ENCODE measurements at regions of chr9 and their contacts with region 1.

Region 1: DNA sequence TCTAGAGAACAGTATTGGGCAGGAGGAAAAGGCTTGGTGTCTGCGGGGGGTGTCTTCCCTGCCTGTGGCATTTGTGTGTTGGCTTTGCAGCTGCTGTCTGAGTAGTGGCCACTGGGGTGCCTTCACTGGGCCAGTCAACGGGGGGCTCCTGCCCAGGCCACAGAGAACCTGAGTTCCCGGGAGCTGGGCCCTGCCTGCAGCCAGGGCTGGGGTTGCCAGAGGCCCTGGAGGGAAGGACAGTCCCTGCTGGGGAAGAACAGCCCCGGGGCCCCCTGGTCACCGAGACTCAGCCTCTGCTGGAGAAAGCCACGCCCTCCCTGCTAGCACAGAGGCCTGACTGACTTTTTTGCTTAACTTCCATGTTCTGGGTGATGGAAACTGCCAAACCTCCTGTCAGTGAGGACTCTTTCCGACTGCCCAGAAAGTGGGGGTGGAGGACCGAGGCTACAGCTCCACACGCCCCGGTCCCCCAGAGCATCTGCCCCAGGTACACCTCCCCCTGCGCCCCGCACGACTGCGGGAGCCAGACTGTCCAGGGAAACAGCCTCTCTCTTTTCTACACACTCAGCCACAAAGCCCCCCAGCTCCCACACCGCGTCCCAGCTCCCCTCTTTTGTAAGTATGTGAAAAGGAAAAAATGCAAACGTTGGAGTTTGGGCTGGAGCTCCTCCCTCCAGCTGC is 133.4 kb downstream of the DAB2IP start:
- DNase-seq: no peak
- H3K4me3 ChIP-seq: no peak overlapping the region
- H3K27ac ChIP-seq: no peak overlapping the region
- H3K4me1 ChIP-seq: no peaks in the 10 kb centered on the region
- H3K27me3 ChIP-seq: no peaks in the 10 kb centered on the region
- CTCF ChIP-seq: no peak

Region 2: DNA sequence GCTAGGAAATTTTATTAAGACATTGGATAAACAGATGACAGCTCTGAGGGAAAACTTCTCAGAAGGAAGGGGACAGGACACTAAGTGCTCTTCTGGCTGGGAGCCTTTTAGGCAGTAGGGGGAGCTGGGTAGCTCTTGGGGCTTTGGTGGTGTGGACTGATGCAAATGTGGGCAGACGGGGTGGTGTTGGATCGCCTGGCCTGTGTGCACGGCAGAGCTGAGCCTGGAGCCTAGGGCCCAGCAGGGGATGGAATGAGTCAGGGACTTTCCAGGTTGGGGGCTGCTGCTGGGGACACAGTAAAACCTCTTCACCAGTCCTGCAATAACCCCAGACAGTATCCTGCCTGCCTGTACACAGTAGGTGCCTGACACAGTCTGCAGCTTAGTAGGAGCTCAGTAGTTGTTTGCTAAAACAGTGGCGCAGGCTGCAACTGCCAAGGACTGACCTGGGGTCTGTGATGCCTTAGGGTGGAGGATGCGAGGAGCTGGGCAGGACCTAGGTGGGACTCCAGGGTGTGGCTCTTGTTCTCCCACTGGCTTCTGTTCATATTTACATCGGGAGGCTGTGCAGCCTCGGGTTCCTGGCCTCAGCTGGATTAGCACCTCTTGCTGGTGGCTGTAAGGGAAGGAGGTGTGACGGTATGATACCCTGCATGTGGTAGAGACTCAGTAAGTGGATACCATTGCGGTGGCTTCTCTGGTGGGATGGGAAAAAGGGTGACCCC is 49.6 kb before region 1 on chr9:
- CTCF ChIA-PET with region 1: no interaction called
- dilution Hi-C with region 1: loop called (anchors 5 kb)
- in situ Hi-C with region 1: no loop called
- intact Hi-C with region 1: no loop called
- DNase-seq: peak; percentile 70
- H3K4me3 ChIP-seq: no peak overlapping the region
- H3K27ac ChIP-seq: peak overlapping the region; percentile 68
- H3K4me1 ChIP-seq: peaks cover 69% of the 10 kb centered on the region
- H3K27me3 ChIP-seq: no peaks in the 10 kb centered on the region
- CTCF ChIP-seq: peak; percentile 50 to 73

Region 3: GRCh38 chr9:121830441-121831140 is 45.7 kb after region 1 on chr9:
- CTCF ChIA-PET with region 1: no interaction called
- dilution Hi-C with region 1: loop called (anchors 5 kb)
- in situ Hi-C with region 1: no loop called
- intact Hi-C with region 1: no loop called
- DNase-seq: no peak
- H3K4me3 ChIP-seq: no peak overlapping the region
- H3K27ac ChIP-seq: no peak overlapping the region
- H3K4me1 ChIP-seq: no peaks in the 10 kb centered on the region
- H3K27me3 ChIP-seq: no peaks in the 10 kb centered on the region
- CTCF ChIP-seq: no peak

Region 4: GRCh38 chr9:122190609-122191381 is 405.9 kb after region 1 on chr9:
- CTCF ChIA-PET with region 1: no interaction called
- dilution Hi-C with region 1: no loop called
- in situ Hi-C with region 1: no loop called
- intact Hi-C with region 1: no loop called
- DNase-seq: peak; percentile 62
- H3K4me3 ChIP-seq: no peak overlapping the region
- H3K27ac ChIP-seq: peak overlapping the region; percentile 51
- H3K4me1 ChIP-seq: peaks cover 24% of the 10 kb centered on the region
- H3K27me3 ChIP-seq: no peaks in the 10 kb centered on the region
- CTCF ChIP-seq: no peak

Measured in mammary epithelial cell (primary cell).